ENCODE measurements at regions of chr12 and their contacts with region 1.

Region 1: DNA sequence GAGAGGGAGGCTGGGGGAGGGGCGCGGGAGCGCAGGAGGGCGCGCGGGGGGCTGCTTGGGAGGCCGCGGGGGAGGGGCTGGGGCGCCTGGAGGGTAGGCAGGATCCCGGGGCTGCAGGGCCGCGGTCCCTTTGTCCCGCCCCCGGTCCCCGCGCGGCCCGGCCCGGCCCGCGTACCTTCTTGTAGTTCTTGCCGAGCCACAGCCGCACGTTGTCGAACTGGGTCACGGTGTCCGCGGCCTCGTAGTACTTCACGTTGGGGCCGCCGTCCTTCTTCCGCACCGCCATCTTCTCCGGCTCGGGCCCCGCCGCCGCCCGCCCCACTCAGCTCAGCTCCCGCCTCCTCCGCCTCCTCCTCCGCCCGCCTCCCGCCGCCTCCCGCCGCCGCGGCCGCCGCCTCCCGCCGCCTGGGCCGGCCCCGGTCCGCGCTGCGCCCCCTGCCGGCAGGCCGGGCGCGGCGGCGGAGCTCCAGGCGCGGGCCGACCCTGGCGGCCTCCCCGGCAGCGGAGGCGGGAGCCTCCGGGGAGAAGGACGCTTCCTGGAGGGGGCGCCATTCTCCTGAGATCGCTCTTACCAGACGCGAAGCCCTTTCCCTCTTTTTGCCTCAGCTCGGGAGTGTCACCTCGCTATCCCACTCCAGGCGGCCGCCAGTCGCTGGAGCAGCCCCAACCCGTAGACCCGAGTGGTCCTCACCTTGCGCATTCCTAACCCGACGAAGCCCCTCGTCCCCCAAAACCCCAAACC is at the start of gene SMARCC2:
- DNase-seq: peak; percentile 84 to 88 (median 85)
- H3K4me3 ChIP-seq: peak within 1 kb of the TSS; percentile 87 to 93
- H3K4me3 Mint-ChIP-seq: peak within 1 kb of the TSS; percentile 94 to 98 (median 96)
- H3K27ac ChIP-seq: peak within 1 kb of the TSS; percentile 91
- H3K27ac Mint-ChIP-seq: peak within 1 kb of the TSS; percentile 97 to 100 (median 98)
- H3K4me1 ChIP-seq: peaks cover 24% of the 10 kb centered on the region
- H3K4me1 Mint-ChIP-seq: peaks cover 27 to 54% (median 43%) of the 10 kb centered on the region in 4 donors
- H3K27me3 ChIP-seq: no peaks in the 10 kb centered on the region
- H3K27me3 Mint-ChIP-seq: peaks cover 0 to 2% of the 10 kb centered on the region in 2 donors
- total RNA-seq, gene SMARCC2: 192 to 199 TPM

Region 2: DNA sequence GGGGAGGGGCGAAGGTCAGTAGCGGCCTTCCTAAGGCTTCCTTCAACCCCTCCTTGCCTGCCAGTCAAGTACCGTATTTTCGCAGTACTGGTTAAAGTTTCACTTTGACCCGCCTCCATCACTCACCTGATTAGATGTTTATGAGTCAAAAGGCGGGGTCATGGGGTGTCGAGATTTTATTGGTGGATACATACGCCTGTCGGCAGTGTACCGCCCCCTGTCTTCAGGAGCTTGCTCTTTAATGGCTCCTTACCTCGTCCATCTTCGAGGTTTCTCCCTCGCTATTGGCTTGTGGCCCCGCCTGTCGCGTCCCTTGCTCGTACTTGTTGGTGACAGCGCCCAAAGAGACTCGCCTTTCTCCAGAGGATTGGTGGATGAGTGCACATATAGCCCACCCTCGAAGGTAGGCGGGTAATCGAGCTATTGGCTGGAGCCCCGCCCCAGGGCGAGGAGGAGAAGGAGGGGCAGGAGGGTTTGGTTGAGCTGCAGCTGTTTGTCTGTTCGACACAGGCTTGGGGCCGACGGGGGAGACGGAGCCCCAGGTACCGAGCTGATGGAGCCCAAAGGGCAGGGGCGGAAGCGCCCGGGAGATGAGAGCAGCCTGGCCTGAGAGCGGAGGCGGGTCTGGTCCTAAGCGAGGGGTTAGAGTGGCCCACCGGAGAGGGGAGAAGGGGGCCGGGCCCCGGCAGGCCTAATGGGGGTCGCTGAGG is 215.6 kb before region 1 on chr12 and contains the start of gene RAB5B:
- CTCF ChIA-PET with region 1: no interaction called
- POLR2A ChIA-PET with region 1: interaction called, 10 read pairs
- intact Hi-C with region 1: no loop called
- DNase-seq: peak; percentile 95 to 100 (median 99)
- H3K4me3 ChIP-seq: peak within 1 kb of the TSS; percentile 60 to 73
- H3K4me3 Mint-ChIP-seq: no peak within 1 kb of the TSS
- H3K27ac ChIP-seq: peak within 1 kb of the TSS; percentile 87
- H3K27ac Mint-ChIP-seq: no peak within 1 kb of the TSS
- H3K4me1 ChIP-seq: peaks cover 37% of the 10 kb centered on the region
- H3K4me1 Mint-ChIP-seq: peaks cover 14 to 30% (median 23%) of the 10 kb centered on the region in 4 donors
- H3K27me3 ChIP-seq: no peaks in the 10 kb centered on the region
- H3K27me3 Mint-ChIP-seq: no peaks in the 10 kb centered on the region
- total RNA-seq, gene RAB5B: 106 to 112 TPM

Region 3: GRCh38 chr12:56127888-56128669 is 61.3 kb before region 1 on chr12 and contains the start of gene ESYT1:
- CTCF ChIA-PET with region 1: interaction called, 264 read pairs
- POLR2A ChIA-PET with region 1: interaction called, 245 read pairs
- intact Hi-C with region 1: loop called (anchors 1 kb)
- DNase-seq: peak; percentile 96 to 100 (median 99)
- H3K4me3 ChIP-seq: peak within 1 kb of the TSS; percentile 81 to 96
- H3K4me3 Mint-ChIP-seq: peak within 1 kb of the TSS; percentile 96 to 100 (median 98)
- H3K27ac ChIP-seq: peak within 1 kb of the TSS; percentile 82
- H3K27ac Mint-ChIP-seq: peak within 1 kb of the TSS; percentile 89 to 99 (median 98)
- H3K4me1 ChIP-seq: peaks cover 69% of the 10 kb centered on the region
- H3K4me1 Mint-ChIP-seq: peaks cover 46 to 84% (median 59%) of the 10 kb centered on the region in 4 donors
- H3K27me3 ChIP-seq: no peaks in the 10 kb centered on the region
- H3K27me3 Mint-ChIP-seq: no peaks in the 10 kb centered on the region
- total RNA-seq, gene ESYT1: 249 to 258 TPM

Region 4: DNA sequence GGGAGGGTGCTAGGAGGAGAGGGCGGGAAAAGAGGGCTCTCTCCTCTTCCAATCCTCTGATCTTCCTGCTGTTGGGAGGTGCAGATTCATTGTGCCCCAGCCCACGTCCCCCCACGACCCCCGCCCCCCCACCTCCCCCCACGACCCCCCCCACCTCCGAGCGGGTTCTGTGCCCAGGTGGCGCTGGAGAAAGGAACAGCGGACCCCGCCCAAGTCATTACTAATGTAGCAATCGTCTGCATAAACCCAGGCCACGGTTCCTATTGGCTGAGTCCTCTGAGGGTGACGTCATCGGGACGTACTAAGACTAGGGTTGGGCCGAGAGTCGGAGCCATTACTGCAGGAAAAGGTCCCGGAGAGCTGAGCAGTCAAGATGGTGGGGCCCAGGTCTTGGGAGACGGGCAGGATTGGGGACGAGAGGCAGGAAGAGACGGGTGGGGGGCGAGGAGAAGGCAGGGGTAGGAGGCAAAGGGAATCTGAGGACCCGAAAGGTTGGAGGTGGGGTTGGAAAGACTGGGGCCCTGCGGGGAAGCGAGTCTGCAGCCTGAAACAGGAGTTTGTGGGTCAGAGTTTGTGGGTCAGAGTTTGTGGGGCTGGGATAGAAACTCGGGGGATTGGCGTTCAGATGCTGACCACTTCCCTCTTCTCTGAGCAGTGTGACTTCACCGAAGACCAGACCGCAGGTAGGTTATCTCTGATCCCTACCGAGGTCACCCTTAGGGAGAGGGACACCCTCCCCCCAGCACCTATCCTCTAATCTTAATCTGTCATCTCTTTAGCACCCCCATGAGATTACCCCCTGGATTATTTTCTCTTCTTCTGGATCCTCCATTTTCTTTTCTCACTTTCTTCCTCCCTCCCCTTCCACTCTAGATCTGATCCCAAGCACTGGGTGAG is 31.1 kb before region 1 on chr12 and contains the start of gene MYL6:
- CTCF ChIA-PET with region 1: interaction called, 7 read pairs
- POLR2A ChIA-PET with region 1: interaction called, 126 read pairs
- intact Hi-C with region 1: loop called (anchors 1 kb)
- DNase-seq: peak; percentile 88 to 98 (median 91)
- H3K4me3 ChIP-seq: peak within 1 kb of the TSS; percentile 86 to 89
- H3K4me3 Mint-ChIP-seq: peak within 1 kb of the TSS; percentile 93 to 100 (median 97)
- H3K27ac ChIP-seq: peak within 1 kb of the TSS; percentile 97
- H3K27ac Mint-ChIP-seq: peak within 1 kb of the TSS; percentile 96 to 100 (median 99)
- H3K4me1 ChIP-seq: peaks cover 40% of the 10 kb centered on the region
- H3K4me1 Mint-ChIP-seq: peaks cover 28 to 64% (median 37%) of the 10 kb centered on the region in 4 donors
- H3K27me3 ChIP-seq: no peaks in the 10 kb centered on the region
- H3K27me3 Mint-ChIP-seq: no peaks in the 10 kb centered on the region
- total RNA-seq, gene MYL6: 567 to 589 TPM

Region 5: DNA sequence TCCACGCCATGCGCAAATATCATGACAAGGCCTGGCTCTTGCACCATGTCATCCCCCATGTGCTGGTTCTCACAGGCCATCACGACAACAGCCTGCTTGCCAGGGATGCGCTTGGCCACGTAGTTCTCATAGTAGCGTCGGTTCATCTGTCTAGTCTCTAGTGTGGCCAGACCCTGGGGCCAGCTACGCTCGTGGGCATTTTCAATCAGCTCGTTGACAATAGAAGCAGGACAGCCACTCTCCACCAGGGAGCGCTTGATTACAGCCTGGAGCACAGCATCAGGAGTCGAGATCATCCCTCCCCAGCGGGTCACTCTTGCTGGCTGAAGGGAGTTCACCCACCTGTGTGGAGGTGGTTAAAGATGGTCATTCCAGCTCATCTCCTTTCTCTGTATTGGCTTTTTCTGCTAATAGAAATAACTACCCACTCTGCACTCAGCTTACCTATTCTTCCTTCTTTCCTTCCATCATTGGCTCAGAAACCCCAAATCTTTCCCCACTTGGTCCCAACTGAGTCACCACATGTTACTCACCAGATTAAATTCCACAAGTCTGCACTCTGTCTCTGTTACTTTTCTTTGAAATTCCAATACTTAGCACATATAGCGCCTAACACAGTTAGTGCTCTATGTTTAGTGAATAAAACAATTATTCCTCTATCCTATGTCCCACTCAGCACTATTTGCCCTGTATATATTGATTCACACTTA is 17.3 kb after region 1 on chr12:
- CTCF ChIA-PET with region 1: interaction called, 10 read pairs
- POLR2A ChIA-PET with region 1: interaction called, 7 read pairs
- intact Hi-C with region 1: no loop called
- DNase-seq: peak in 4 of 5 donors; percentile 22 to 48 (median 24)
- H3K4me3 ChIP-seq: no peak overlapping the region
- H3K4me3 Mint-ChIP-seq: no peak overlapping the region
- H3K27ac ChIP-seq: no peak overlapping the region
- H3K27ac Mint-ChIP-seq: peak overlapping the region in 3 of 7 donors; percentile 33 to 55 (median 37)
- H3K4me1 ChIP-seq: no peaks in the 10 kb centered on the region
- H3K4me1 Mint-ChIP-seq: peaks cover 0 to 4% (median 2%) of the 10 kb centered on the region in 4 donors
- H3K27me3 ChIP-seq: no peaks in the 10 kb centered on the region
- H3K27me3 Mint-ChIP-seq: no peaks in the 10 kb centered on the region

Region 6: DNA sequence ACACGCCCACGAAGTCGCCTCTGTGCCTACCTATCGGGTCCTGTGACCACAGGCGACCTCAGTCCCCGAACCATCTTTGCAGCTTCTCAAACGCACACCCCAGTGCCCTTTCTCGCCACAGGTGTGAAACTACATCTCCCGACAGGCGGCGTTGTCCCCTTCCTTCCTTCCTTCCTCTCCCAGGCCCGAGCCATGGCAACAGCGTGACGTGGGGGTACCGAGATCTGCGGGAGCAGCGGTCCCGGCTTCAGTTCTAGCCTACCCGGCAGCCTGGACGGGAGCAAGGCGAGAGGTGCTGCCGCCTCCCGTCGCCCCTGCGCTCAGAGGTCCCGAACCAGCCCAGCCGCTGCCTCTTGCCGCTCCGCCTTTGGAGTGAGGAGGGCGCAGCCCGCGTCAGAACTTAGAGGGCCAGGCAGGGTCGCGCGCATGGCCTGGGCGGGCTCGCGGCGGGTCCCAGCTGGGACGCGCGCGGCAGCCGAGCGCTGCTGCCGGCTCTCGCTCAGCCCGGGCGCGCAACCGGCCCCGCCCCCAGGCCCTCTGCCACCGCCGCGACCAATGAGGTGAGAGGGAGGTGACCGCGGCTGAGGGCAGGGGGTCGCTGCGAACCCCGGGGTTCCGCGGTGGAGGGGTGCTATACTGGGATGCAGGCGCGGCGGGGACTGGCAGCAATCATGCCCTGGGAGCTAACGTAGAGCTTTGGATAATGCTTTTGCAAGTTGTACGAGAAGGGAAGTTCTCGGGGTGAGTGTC is 77.5 kb after region 1 on chr12 and contains the start of gene COQ10A:
- CTCF ChIA-PET with region 1: interaction called, 3 read pairs
- POLR2A ChIA-PET with region 1: interaction called, 14 read pairs
- intact Hi-C with region 1: loop called (anchors 2 kb)
- DNase-seq: peak; percentile 89 to 96 (median 91)
- H3K4me3 ChIP-seq: peak within 1 kb of the TSS; percentile 27 to 90
- H3K4me3 Mint-ChIP-seq: peak within 1 kb of the TSS; percentile 89 to 99 (median 96)
- H3K27ac ChIP-seq: peak within 1 kb of the TSS; percentile 84
- H3K27ac Mint-ChIP-seq: peak within 1 kb of the TSS; percentile 90 to 99 (median 97)
- H3K4me1 ChIP-seq: peaks cover 14% of the 10 kb centered on the region
- H3K4me1 Mint-ChIP-seq: peaks cover 10 to 23% (median 16%) of the 10 kb centered on the region in 4 donors
- H3K27me3 ChIP-seq: no peaks in the 10 kb centered on the region
- H3K27me3 Mint-ChIP-seq: no peaks in the 10 kb centered on the region
- total RNA-seq, gene COQ10A: 35.3 to 38.6 TPM

Region 7: DNA sequence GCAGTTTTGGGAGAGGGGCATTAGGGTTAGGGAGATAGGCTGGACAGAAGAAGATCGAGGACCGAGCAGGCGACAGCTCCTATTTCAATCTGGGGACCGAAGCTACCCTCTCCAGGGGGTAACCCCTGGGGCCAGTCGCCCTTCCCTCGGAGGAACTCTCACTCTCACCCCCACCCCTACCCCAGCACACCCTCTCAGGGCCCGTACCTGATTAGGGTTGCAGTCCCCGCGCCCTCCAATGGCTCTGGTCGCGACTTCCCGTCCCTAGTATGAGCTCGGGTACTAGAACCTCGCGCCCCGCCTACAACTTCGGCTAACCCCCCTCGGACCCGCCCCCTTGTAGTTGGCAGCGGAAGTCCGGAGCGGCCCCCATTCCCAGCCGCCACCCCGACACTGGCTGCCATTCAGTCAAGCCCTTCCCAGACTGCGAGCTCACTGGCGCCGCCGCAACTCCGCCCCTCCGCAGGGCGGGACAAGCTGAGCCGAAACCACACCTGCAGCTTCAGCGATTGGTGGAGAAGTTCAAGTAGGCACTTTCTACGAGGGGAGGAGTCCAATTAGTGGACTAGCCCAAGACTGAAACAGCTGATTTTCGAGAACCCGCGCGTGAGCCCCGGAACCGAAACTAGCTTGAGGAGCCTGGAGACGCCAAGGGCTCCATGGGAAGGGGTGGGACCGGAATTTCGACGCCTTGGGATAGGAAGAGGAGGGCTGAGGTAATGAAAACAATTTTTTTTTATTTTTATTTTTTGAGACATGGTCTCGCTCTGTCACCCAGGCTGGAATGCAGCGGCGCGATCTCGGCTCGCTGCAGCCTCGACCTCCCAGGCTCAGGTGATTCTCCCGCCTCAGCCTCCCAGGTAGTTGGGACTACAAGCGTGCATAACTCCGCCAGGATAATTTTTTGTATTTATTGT is 170.8 kb after region 1 on chr12 and contains the start of gene STAT2:
- CTCF ChIA-PET with region 1: no interaction called
- POLR2A ChIA-PET with region 1: interaction called, 22 read pairs
- intact Hi-C with region 1: no loop called
- DNase-seq: peak; percentile 99 to 100 (median 100)
- H3K4me3 ChIP-seq: peak within 1 kb of the TSS; percentile 78 to 97
- H3K4me3 Mint-ChIP-seq: peak within 1 kb of the TSS; percentile 92 to 98 (median 96)
- H3K27ac ChIP-seq: peak within 1 kb of the TSS; percentile 84
- H3K27ac Mint-ChIP-seq: peak within 1 kb of the TSS; percentile 89 to 98 (median 96)
- H3K4me1 ChIP-seq: peaks cover 29% of the 10 kb centered on the region
- H3K4me1 Mint-ChIP-seq: peaks cover 16 to 30% (median 21%) of the 10 kb centered on the region in 4 donors
- H3K27me3 ChIP-seq: no peaks in the 10 kb centered on the region
- H3K27me3 Mint-ChIP-seq: no peaks in the 10 kb centered on the region
- total RNA-seq, gene STAT2: 192 to 193 TPM

Measured in CD4-positive, alpha-beta memory T cell (primary cell).